ENCODE measurements at regions of chr10 and their contacts with region 1.

Region 1: DNA sequence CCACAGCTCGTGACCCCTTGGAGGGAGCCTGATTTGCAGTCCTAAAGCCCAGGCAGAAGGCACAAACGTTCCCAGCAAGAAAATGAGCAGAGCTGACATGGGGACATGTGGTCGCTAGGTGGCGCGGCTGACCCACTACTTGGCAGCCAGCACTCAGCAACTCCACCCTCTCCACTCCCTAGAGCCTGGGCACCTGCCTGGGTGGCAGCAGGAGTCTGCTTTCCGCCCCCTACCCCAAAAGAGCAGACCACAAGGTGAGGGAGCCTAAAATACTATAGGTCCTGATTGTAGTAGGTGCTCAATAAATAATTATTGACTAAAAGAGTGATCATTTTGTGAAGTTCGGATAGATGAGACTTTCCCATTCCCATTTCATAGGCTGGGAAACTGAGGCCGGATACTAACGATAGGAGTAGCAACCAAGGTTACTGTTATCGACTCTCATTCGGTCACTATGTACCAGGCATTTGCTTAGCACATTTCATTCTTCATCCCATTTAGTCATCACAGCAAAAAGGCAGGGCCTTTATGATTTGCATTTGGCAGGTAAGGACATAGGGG is 57.4 kb downstream of the NEUROG3 start:
- DNase-seq: peak; percentile 77
- H3K4me3 Mint-ChIP-seq: no peak overlapping the region
- H3K27ac Mint-ChIP-seq: no peak overlapping the region
- H3K4me1 Mint-ChIP-seq: no peaks in the 10 kb centered on the region
- H3K27me3 Mint-ChIP-seq: peaks cover 28% of the 10 kb centered on the region
- CTCF ChIP-seq: peak; percentile 90

Region 2: GRCh38 chr10:69425511-69426298 is 90.1 kb before region 1 on chr10:
- CTCF ChIA-PET with region 1: interaction called, 14 read pairs
- POLR2A ChIA-PET with region 1: no interaction called
- intact Hi-C with region 1: no loop called
- DNase-seq: no peak
- H3K4me3 Mint-ChIP-seq: no peak overlapping the region
- H3K27ac Mint-ChIP-seq: no peak overlapping the region
- H3K4me1 Mint-ChIP-seq: peaks cover 12% of the 10 kb centered on the region
- H3K27me3 Mint-ChIP-seq: no peaks in the 10 kb centered on the region
- CTCF ChIP-seq: no peak

Region 3: DNA sequence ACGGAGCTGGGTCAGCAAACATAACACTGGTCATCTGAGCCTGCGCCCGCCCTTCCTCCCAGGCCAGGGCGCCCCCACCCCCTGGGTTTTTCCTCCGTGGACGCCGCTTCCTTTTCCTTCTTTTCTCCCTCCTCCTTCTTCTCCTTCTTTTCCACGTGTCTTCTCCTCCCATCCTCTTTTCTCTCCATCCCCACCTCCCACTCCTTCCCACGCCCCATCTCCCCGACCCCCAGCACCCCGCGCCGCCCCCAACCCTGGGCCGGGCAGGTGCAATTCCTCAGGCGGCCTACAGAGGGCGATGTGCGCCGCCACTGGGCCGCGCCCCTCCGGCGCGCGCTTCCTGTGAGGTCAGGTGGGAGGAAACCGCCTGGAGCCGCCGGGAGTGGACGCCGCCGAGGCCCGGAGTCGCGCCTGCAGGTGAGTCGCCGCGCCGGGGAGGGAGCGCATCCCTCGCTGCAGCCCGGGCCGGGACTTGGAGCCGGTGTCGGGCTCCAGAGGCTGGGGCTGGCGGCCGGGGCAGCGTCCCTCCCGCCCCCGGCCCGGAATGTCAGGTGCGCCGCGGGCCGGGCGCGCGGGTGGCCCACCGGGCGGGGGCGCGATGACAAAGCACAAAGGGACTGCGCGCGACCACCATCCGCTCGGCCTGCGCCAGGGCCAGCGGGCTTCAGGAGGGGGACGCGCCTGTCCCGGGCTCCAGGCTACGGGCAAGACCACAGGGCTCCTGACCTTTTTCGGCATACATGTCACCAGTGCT is 114.3 kb after region 1 on chr10 and contains the start of gene FAM241B:
- CTCF ChIA-PET with region 1: interaction called, 248 read pairs
- POLR2A ChIA-PET with region 1: no interaction called
- intact Hi-C with region 1: no loop called
- DNase-seq: peak; percentile 63
- H3K4me3 Mint-ChIP-seq: peak within 1 kb of the TSS; percentile 58
- H3K27ac Mint-ChIP-seq: no peak within 1 kb of the TSS
- H3K4me1 Mint-ChIP-seq: no peaks in the 10 kb centered on the region
- H3K27me3 Mint-ChIP-seq: no peaks in the 10 kb centered on the region
- CTCF ChIP-seq: peak; percentile 99
- total RNA-seq, gene FAM241B: 7.5 and 11.0 TPM in 2 replicates

Region 4: GRCh38 chr10:69716711-69717560 is 201.2 kb after region 1 on chr10:
- CTCF ChIA-PET with region 1: interaction called, 37 read pairs
- POLR2A ChIA-PET with region 1: no interaction called
- intact Hi-C with region 1: loop called (anchors 1 kb)
- DNase-seq: peak; percentile 76
- H3K4me3 Mint-ChIP-seq: no peak overlapping the region
- H3K27ac Mint-ChIP-seq: no peak overlapping the region
- H3K4me1 Mint-ChIP-seq: peaks cover 17% of the 10 kb centered on the region
- H3K27me3 Mint-ChIP-seq: no peaks in the 10 kb centered on the region
- CTCF ChIP-seq: peak; percentile 88